ENCODE measurements at regions of chr6 and their contacts with region 1.

Region 1: GRCh38 chr6:163965426-163966348 is 551.2 kb downstream of the QKI start:
- DNase-seq: peak; percentile 75 to 79
- ATAC-seq: peak; percentile 24 to 51
- H3K4me3 ChIP-seq: peak overlapping the region in 2 of 4 donors; percentile 1
- H3K27ac ChIP-seq: peak overlapping the region; percentile 81 to 99 (median 92)
- H3K4me1 ChIP-seq: peaks cover 49 to 50% of the 10 kb centered on the region in 2 donors
- H3K27me3 ChIP-seq: no peaks in the 10 kb centered on the region
- CTCF ChIP-seq: no peak
- POLR2A ChIP-seq: peak in 1 of 2 donors; percentile 7

Region 2: DNA sequence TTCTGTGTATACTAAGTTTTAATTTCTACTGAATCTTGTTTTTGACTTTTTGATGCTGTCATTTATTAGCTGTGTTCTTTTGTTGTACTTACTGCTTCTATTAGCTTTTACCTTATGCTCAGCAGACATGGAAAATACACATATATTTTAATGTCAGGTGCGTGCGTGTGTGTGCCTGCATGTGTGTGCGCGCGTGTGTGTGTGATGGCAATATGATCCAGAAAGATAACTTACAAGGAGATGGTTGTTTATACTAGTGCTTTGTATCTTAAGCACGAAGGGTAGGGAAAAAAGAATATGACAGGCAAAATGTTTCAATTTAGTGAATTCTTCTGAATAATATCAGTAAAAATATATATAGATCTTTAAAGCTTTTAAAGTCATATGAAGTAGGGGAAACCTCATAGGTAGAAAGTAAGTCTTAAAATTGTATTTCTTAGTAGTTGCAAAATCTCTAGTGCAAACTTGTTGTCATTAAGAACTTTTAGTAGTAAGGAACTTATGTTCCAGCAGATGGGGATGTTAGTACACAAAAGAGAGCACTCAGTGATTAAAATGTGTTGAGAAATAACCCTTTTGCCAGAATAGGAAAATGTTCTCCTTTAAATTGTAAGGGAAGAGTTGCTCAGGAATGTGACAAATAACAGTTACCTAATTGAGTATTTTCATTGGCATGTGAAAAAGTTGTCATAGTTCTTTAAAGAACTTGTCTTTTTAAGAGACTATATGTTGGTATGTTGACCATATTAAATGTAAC is 538.0 kb before region 1 on chr6:
- in situ Hi-C with region 1: loop called in 1 of 4 experiments (anchors 5 kb)
- intact Hi-C with region 1: no loop called
- DNase-seq: no peak
- ATAC-seq: peak; percentile 62 to 68
- H3K4me3 ChIP-seq: peak overlapping the region in 3 of 4 donors; percentile 13 to 26 (median 17)
- H3K27ac ChIP-seq: peak overlapping the region; percentile 98 to 99 (median 99)
- H3K4me1 ChIP-seq: peaks cover 96 to 100% of the 10 kb centered on the region in 2 donors
- H3K27me3 ChIP-seq: no peaks in the 10 kb centered on the region
- CTCF ChIP-seq: peak in 4 of 5 experiments; percentile 33 to 83 (median 44)
- POLR2A ChIP-seq: no peak

Region 3: DNA sequence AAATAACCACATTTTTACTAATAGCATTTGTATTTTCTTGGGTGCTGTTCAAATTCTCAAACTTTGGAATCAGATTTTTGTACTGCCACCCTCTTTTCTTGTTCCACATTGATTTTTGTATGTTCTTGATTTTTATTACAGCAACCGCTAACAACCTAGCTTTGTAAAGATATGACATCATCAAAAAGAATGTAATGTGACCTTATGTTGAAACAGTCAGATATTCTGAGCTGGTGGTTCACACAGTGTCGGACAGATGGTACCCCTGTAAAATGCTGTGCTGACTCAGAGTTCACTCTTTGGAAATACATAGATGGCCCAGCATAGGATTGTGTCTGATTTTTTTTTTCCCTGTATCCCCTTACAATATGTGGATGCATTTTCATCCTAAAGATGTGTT is 432.2 kb before region 1 on chr6:
- in situ Hi-C with region 1: no loop called
- intact Hi-C with region 1: loop called (anchors 5 kb)
- DNase-seq: peak in 1 of 2 donors; percentile 57
- ATAC-seq: peak; percentile 87 to 91
- H3K4me3 ChIP-seq: no peak overlapping the region
- H3K27ac ChIP-seq: peak overlapping the region; percentile 75 to 85 (median 82)
- H3K4me1 ChIP-seq: peaks cover 93 to 95% of the 10 kb centered on the region in 2 donors
- H3K27me3 ChIP-seq: no peaks in the 10 kb centered on the region
- CTCF ChIP-seq: no peak
- POLR2A ChIP-seq: no peak

Region 4: GRCh38 chr6:164007881-164008280 is 42.2 kb after region 1 on chr6:
- in situ Hi-C with region 1: no loop called
- intact Hi-C with region 1: loop called (anchors 2 kb)
- DNase-seq: peak; percentile 63 to 83
- ATAC-seq: peak; percentile 92 to 95
- H3K4me3 ChIP-seq: no peak overlapping the region
- H3K27ac ChIP-seq: peak overlapping the region in 3 of 4 donors; percentile 19 to 48 (median 44)
- H3K4me1 ChIP-seq: peaks cover 7 to 23% of the 10 kb centered on the region in 2 donors
- H3K27me3 ChIP-seq: no peaks in the 10 kb centered on the region
- CTCF ChIP-seq: no peak
- POLR2A ChIP-seq: no peak

Region 5: DNA sequence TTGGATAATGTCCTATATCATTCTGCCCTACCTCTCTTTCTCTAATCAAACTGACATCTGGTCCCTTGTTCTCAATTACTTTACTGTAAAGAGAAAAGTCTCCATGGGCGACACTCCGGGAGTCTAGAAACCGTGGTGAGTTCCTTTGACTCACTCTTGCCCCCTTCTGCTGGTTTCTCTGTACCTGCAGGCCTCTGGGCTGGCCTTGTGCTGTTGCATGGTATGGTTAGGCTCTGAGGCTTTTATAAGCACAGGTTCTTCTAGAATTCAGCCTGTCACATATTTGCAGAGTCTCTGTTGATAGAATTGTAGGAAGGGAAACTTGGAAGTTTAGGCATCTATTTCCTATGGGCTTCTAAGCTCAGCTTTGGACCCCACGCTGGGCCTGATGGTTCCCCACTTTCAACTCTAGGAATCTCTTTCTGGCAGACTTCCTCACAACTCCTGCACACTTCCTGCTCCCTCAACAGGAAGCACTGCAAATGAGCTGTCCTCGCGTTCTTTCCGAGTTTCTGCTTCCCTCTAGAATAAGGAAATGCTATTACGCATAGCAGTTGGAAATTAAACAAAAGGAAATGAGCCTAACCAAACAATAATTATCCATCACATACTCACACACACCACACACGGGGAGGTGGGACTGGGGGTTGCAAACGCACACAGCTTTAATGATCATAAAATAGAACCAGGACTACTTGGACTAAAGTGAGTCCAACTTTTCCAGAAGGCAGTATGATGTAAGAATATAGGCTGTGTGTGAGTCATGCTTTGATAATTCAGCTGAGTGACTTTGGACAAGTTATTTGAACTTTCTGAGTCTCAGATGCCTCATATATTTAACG is 132.1 kb after region 1 on chr6:
- in situ Hi-C with region 1: loop called in 1 of 4 experiments (anchors 10 kb)
- intact Hi-C with region 1: loop called (anchors 1 kb)
- DNase-seq: peak in 1 of 2 donors; percentile 68
- ATAC-seq: peak; percentile 41 to 62
- H3K4me3 ChIP-seq: no peak overlapping the region
- H3K27ac ChIP-seq: peak overlapping the region; percentile 84 to 96 (median 89)
- H3K4me1 ChIP-seq: peaks cover 33 to 37% of the 10 kb centered on the region in 2 donors
- H3K27me3 ChIP-seq: no peaks in the 10 kb centered on the region
- CTCF ChIP-seq: peak in 3 of 5 experiments; percentile 32 to 47 (median 38)
- POLR2A ChIP-seq: no peak

Region 6: DNA sequence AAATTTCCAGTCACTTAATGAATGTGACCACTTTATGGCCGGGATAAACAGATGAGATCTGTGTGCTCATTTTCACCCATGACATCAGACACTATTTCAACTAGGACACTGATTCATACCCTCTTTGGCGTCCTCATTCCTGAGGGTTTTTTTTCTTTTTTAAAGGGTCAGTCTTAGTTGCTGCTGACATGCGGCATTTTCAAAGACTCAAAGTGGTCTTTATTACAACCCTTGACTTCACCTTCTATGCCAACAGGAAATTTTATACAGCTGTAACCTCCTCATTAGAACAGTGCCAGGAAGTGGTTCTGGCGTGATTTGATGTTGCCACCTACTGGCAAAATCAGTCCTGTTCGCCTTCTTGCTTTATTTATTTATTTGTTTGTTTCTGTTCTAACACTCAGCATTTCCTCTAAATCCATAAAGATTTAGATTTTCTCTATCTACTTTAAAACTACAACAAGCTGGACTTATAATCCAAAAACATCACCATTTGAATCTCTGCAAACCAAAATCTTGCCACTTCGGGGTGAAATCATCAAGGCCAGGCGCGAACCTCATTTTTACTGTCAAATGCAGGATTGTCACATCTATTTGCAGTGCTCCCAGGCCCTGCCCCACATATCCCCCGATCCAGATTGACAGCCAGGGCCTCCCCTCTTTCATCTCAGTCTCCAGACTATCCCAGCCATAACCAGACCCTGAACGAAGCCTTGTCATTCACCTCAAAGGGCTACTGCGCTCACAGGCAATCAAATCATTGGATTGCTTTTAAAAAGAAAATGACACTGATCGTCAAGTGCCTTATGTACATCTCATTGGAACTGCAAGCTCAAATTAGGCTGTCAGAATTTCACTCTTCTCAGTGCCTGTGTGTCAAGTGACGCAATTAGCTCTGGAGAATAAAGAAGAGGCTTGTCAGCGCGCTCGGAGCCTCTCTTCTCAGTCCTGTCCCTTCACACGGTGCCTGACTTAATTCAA is 1266.2 kb after region 1 on chr6:
- in situ Hi-C with region 1: no loop called
- intact Hi-C with region 1: loop called (anchors 5 kb)
- DNase-seq: peak; percentile 22 to 51
- ATAC-seq: peak; percentile 92 to 96
- H3K4me3 ChIP-seq: peak overlapping the region; percentile 2 to 37 (median 18)
- H3K27ac ChIP-seq: peak overlapping the region; percentile 79 to 86 (median 84)
- H3K4me1 ChIP-seq: peaks cover 13 to 18% of the 10 kb centered on the region in 2 donors
- H3K27me3 ChIP-seq: no peaks in the 10 kb centered on the region
- CTCF ChIP-seq: peak; percentile 57 to 76 (median 74)
- POLR2A ChIP-seq: no peak

Measured in gastrocnemius medialis (tissue), 4 donors.